B cell (primary cell): ENCODE measurements at regions of chr2 and their contacts with region 1.

Region 1: DNA sequence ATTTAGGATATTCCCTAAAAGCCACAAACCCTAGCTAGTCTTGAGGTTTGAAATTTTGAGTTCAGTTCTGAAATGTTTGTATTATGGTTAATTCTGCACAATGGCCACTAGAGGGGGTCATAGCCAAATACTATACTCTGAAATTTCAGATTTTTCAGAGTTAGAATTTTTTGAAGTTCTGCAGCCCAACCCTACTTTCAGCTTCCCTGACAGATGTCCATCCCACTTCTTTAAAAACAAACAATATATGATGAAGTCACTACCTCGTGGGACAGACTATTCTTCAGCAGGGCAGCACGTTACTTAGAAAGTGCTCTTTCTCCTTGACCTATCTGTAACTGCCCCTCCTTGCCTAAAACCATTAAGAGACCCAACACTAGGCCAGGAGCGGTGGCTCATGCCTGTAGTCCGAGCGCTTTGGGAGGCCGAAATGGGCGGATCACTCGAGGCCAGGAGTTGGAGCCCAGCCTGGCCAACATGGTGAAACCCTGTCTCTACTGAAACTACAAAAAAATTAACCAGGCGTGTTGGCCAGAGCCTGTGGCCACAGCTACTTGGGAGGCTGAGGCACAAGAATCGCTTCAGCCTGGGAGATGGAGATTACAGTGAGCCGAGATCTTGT is 48.2 kb upstream of the PAPOLG start:
- DNase-seq: peak; percentile 60
- ATAC-seq: peak; percentile 43
- H3K4me3 ChIP-seq: no peak overlapping the region
- H3K4me3 Mint-ChIP-seq: no peak overlapping the region
- H3K27ac ChIP-seq: no peak overlapping the region
- H3K27ac Mint-ChIP-seq: no peak overlapping the region
- H3K4me1 ChIP-seq: no peaks in the 10 kb centered on the region
- H3K4me1 Mint-ChIP-seq: no peaks in the 10 kb centered on the region
- H3K27me3 ChIP-seq: no peaks in the 10 kb centered on the region
- H3K27me3 Mint-ChIP-seq: peaks cover 14% of the 10 kb centered on the region
- CTCF ChIP-seq: peak; percentile 89

Region 2: GRCh38 chr2:60569680-60570111 is 138.2 kb before region 1 on chr2:
- CTCF ChIA-PET with region 1: no interaction called
- POLR2A ChIA-PET with region 1: no interaction called
- intact Hi-C with region 1: no loop called
- DNase-seq: peak; percentile 54
- ATAC-seq: peak; percentile 57
- H3K4me3 ChIP-seq: peak overlapping the region; percentile 42 to 77 (median 67)
- H3K4me3 Mint-ChIP-seq: no peak overlapping the region
- H3K27ac ChIP-seq: peak overlapping the region in 1 of 2 donors; percentile 18
- H3K27ac Mint-ChIP-seq: no peak overlapping the region
- H3K4me1 ChIP-seq: peaks cover 20 to 31% of the 10 kb centered on the region in 2 donors
- H3K4me1 Mint-ChIP-seq: peaks cover 13% of the 10 kb centered on the region
- H3K27me3 ChIP-seq: peaks cover 0 to 24% (median 21%) of the 10 kb centered on the region in 4 experiments
- H3K27me3 Mint-ChIP-seq: peaks cover 16% of the 10 kb centered on the region
- CTCF ChIP-seq: no peak

Region 3: GRCh38 chr2:60634438-60634837 is 73.4 kb before region 1 on chr2:
- CTCF ChIA-PET with region 1: no interaction called
- POLR2A ChIA-PET with region 1: no interaction called
- intact Hi-C with region 1: no loop called
- DNase-seq: no peak
- ATAC-seq: no peak
- H3K4me3 ChIP-seq: no peak overlapping the region
- H3K4me3 Mint-ChIP-seq: no peak overlapping the region
- H3K27ac ChIP-seq: no peak overlapping the region
- H3K27ac Mint-ChIP-seq: no peak overlapping the region
- H3K4me1 ChIP-seq: no peaks in the 10 kb centered on the region
- H3K4me1 Mint-ChIP-seq: no peaks in the 10 kb centered on the region
- H3K27me3 ChIP-seq: no peaks in the 10 kb centered on the region
- H3K27me3 Mint-ChIP-seq: peaks cover 26% of the 10 kb centered on the region
- CTCF ChIP-seq: no peak

Region 4: GRCh38 chr2:60693551-60693950 is 14.3 kb before region 1 on chr2:
- CTCF ChIA-PET with region 1: interaction called, 21 read pairs
- POLR2A ChIA-PET with region 1: no interaction called
- intact Hi-C with region 1: no loop called
- DNase-seq: no peak
- ATAC-seq: no peak
- H3K4me3 ChIP-seq: no peak overlapping the region
- H3K4me3 Mint-ChIP-seq: no peak overlapping the region
- H3K27ac ChIP-seq: no peak overlapping the region
- H3K27ac Mint-ChIP-seq: no peak overlapping the region
- H3K4me1 ChIP-seq: no peaks in the 10 kb centered on the region
- H3K4me1 Mint-ChIP-seq: no peaks in the 10 kb centered on the region
- H3K27me3 ChIP-seq: no peaks in the 10 kb centered on the region
- H3K27me3 Mint-ChIP-seq: peaks cover 11% of the 10 kb centered on the region
- CTCF ChIP-seq: no peak

Region 5: GRCh38 chr2:60745330-60745729 is 37.5 kb after region 1 on chr2:
- CTCF ChIA-PET with region 1: no interaction called
- POLR2A ChIA-PET with region 1: no interaction called
- intact Hi-C with region 1: no loop called
- DNase-seq: no peak
- ATAC-seq: no peak
- H3K4me3 ChIP-seq: no peak overlapping the region
- H3K4me3 Mint-ChIP-seq: no peak overlapping the region
- H3K27ac ChIP-seq: no peak overlapping the region
- H3K27ac Mint-ChIP-seq: no peak overlapping the region
- H3K4me1 ChIP-seq: peaks cover 6 to 8% of the 10 kb centered on the region in 2 donors
- H3K4me1 Mint-ChIP-seq: peaks cover 9% of the 10 kb centered on the region
- H3K27me3 ChIP-seq: peaks cover 0 to 3% (median 0%) of the 10 kb centered on the region in 4 experiments
- H3K27me3 Mint-ChIP-seq: no peaks in the 10 kb centered on the region
- CTCF ChIP-seq: no peak